ENCODE measurements at regions of chr17 and their contacts with region 1.

Region 1: DNA sequence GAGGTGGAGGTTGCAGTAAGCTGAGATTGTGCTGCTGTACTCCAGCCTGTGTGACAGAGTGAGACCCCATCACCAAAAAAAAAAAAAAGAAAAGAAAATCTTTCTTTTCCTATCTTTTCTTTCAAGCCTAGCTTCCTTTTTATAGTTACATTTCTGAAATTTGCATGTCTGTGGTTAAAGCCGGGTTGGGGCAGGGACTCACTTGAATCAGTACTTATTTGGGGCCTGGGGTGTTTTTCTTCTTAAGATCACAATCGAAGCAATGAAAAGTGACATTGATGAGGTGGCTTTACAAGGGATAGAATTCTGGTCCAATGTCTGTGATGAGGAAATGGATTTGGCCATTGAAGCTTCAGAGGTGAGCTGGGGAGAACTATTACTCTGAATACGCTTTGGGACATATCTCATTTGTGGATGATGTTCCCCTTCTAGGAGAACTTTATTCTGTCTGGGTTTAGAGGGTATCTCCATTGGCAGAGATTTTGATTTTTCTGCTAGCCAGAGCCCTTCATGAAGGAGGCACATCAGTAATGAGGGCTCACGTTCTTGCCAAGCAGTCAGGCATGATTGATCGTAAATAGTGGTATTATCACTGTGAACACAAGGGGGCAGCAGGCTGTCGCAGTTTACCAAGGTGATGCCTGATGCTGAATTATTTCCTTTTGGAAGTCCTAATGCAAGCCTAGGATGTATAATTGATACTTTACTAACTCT is 14.3 kb downstream of the KPNB1 start:
- DNase-seq: no peak
- H3K4me3 ChIP-seq: no peak overlapping the region
- H3K27ac ChIP-seq: no peak overlapping the region
- H3K27me3 ChIP-seq: no peaks in the 10 kb centered on the region
- CTCF ChIP-seq: peak; percentile 79

Region 2: GRCh38 chr17:47470836-47471235 is 193.2 kb before region 1 on chr17:
- CTCF ChIA-PET with region 1: no interaction called
- POLR2A ChIA-PET with region 1: no interaction called
- DNase-seq: no peak
- H3K4me3 ChIP-seq: no peak overlapping the region
- H3K27ac ChIP-seq: no peak overlapping the region
- H3K27me3 ChIP-seq: no peaks in the 10 kb centered on the region
- CTCF ChIP-seq: no peak

Region 3: DNA sequence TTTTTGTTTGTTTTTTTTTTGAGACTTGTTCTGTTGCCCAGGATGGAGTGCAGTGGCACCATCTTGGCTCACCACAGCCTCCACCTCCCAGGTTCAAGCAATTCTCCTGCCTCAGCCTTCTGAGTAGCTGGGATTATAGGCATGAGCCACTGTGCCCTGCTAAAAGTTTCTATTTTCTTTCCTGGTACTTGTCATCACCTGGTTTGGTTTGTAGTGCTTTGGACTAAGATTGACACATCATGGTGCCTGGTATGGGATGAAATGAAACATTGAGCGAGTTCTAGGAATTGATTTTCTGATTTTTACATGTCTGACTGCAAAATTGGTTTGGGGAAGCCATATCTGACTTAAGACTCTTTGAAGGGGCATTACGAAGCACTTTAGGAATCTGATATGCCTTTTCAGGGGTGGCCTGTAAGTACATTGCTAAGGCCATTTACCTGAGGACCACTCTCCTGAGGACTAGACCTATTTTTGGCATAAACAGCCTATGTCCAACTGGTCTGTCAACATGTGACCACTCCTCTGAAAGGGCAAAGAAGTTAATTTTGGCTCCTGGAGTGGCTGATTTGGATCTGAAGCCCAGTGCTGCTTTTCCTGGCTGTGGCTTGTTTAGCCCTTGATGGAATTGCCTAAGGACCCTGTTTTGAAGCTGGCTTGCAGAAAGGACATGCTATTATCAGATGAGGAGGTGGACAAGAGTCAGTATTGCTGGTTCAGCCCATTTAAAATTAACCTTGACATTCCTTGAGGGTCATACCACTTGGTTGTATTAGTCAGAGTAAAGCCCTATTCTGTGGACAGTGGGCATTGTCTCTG is 11.5 kb after region 1 on chr17:
- CTCF ChIA-PET with region 1: interaction called, 15 read pairs
- POLR2A ChIA-PET with region 1: interaction called, 4 read pairs
- DNase-seq: no peak
- H3K4me3 ChIP-seq: no peak overlapping the region
- H3K27ac ChIP-seq: no peak overlapping the region
- H3K27me3 ChIP-seq: no peaks in the 10 kb centered on the region
- CTCF ChIP-seq: no peak

Region 4: GRCh38 chr17:47686276-47686635 is 22.2 kb after region 1 on chr17:
- CTCF ChIA-PET with region 1: interaction called, 15 read pairs
- POLR2A ChIA-PET with region 1: no interaction called
- DNase-seq: no peak
- H3K4me3 ChIP-seq: no peak overlapping the region
- H3K27ac ChIP-seq: peak overlapping the region; percentile 39
- H3K27me3 ChIP-seq: no peaks in the 10 kb centered on the region
- CTCF ChIP-seq: no peak